Ovary (tissue), 10 donors: ENCODE measurements at regions of chr5 and their contacts with region 1.

Region 1: GRCh38 chr5:147446523-147446922 is 63.3 kb downstream of the DPYSL3 start:
- DNase-seq: peak in 2 of 5 donors; percentile 28 to 51
- H3K4me3 ChIP-seq: no peak overlapping the region
- H3K27ac ChIP-seq: peak overlapping the region in 1 of 2 donors; percentile 61
- H3K4me1 ChIP-seq: peaks cover 26% of the 10 kb centered on the region
- H3K27me3 ChIP-seq: no peaks in the 10 kb centered on the region
- CTCF ChIP-seq: no peak
- EP300 ChIP-seq: no peak
- POLR2A ChIP-seq: no peak

Region 2: GRCh38 chr5:147410496-147411355 is 35.8 kb before region 1 on chr5:
- intact Hi-C with region 1: loop called in 1 of 4 experiments (anchors 5 kb)
- DNase-seq: peak in 1 of 5 donors; percentile 13
- H3K4me3 ChIP-seq: no peak overlapping the region
- H3K27ac ChIP-seq: peak overlapping the region; percentile 12 to 16
- H3K4me1 ChIP-seq: peaks cover 20% of the 10 kb centered on the region
- H3K27me3 ChIP-seq: no peaks in the 10 kb centered on the region
- CTCF ChIP-seq: no peak
- EP300 ChIP-seq: no peak
- POLR2A ChIP-seq: no peak